SK-N-SH (cell line): ENCODE measurements at regions of chr2 and their contacts with region 1.

Region 1: GRCh38 chr2:46296840-46297545 is at the start of gene EPAS1:
- DNase-seq: peak; percentile 100
- H3K4me3 ChIP-seq: peak within 1 kb of the TSS; percentile 96 to 98
- H3K27ac ChIP-seq: peak within 1 kb of the TSS; percentile 71 to 96
- H3K4me1 ChIP-seq: peaks cover 7 to 25% of the 10 kb centered on the region in 2 experiments; a peak in 2 of 4 replicates
- H3K27me3 ChIP-seq: no peaks in the 10 kb centered on the region
- CTCF ChIP-seq: no peak
- EP300 ChIP-seq: no peak
- RAD21 ChIP-seq: no peak
- polyA plus RNA-seq, gene EPAS1: 69.2 and 92.2 TPM in 2 replicates

Region 2: DNA sequence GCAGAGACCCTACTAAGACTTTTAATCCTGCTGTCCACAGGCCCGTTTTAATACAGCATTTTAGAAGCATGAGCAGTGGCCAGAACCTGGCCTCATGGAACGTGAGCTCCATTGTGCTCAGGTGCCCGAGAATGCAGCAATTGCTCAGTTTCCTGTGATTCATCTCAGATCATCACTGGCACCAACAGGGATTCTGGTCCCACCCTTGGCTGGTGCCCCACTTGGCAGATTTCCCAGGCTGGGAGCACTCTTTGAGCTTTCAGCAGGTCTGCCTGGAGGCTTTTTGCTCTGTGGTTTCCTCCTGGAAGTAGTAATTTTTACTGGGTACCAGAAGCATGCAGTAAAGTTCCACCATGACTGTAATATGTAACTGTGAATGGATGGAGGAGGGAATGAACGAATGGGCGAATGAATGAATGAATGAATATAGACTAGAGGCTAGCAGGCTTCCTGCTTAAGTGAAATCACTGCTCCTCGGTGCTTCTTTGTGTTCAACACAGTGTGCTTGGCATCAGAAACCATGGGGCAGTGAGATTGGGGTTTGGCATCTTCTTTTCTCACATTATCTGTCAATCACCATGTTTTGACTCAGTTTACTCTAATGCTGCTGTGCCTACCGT is 332.7 kb before region 1 on chr2:
- CTCF ChIA-PET with region 1: no interaction called
- POLR2A ChIA-PET with region 1: no interaction called
- DNase-seq: peak; percentile 78
- H3K4me3 ChIP-seq: peak overlapping the region in 1 of 2 experiments; percentile 31; a peak in 2 of 4 replicates
- H3K27ac ChIP-seq: peak overlapping the region; percentile 72
- H3K4me1 ChIP-seq: peaks cover 31 to 43% of the 10 kb centered on the region in 2 experiments
- H3K27me3 ChIP-seq: no peaks in the 10 kb centered on the region
- CTCF ChIP-seq: no peak
- EP300 ChIP-seq: peak; percentile 72 to 99
- RAD21 ChIP-seq: peak; percentile 18; the same call in 1 of the 2 replicates

Region 3: GRCh38 chr2:46010925-46011490 is 286.0 kb before region 1 on chr2:
- CTCF ChIA-PET with region 1: interaction called, 26 read pairs
- POLR2A ChIA-PET with region 1: interaction called, 3 read pairs
- DNase-seq: peak; percentile 72
- H3K4me3 ChIP-seq: no peak overlapping the region
- H3K27ac ChIP-seq: peak overlapping the region in 1 of 2 experiments; percentile 28; a peak in 2 of 4 replicates
- H3K4me1 ChIP-seq: peaks cover 8 to 23% of the 10 kb centered on the region in 2 experiments; a peak in 3 of 4 replicates
- H3K27me3 ChIP-seq: no peaks in the 10 kb centered on the region
- CTCF ChIP-seq: peak; percentile 92
- EP300 ChIP-seq: no peak
- RAD21 ChIP-seq: peak; percentile 93

Region 4: DNA sequence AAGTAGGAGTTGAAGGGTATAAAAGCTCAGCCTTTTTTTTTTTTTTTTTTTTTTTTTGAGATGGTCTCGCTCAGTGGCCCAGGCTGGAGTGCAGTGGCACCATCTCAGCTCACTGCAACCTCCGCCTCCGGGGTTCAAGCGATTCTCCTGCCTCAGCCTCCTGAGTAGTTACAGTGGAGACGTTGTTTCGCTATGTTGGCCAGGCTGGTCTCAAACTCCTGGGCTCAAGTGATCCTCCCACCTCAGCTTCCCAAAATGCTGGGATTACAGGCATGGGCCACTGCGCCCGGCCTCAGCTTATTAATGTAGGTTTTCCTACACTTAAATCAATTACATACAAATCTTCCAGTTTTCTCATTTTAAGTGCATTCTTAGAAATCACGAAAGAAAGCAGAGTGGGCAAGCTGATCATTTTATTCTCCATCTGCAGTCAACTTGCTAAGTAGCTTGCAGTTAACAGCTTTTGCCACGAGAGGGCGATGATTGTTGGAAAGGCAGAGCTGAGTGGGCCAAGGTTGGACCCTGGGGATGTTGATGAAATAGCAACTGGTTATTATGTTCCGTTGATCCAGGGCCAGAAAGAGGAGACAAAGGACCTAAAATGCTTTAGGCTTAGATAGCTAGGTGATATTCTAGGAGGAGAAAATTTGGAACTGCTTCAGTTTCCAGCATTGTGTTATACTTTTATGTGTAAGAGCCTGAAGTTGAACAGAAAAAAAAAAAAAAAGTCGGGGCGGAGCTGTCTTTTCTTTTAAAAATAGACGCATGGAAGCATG is 234.2 kb before region 1 on chr2:
- CTCF ChIA-PET with region 1: interaction called, 45 read pairs
- POLR2A ChIA-PET with region 1: interaction called, 14 read pairs
- DNase-seq: peak; percentile 82
- H3K4me3 ChIP-seq: no peak overlapping the region; a peak in 1 of 4 replicates
- H3K27ac ChIP-seq: no peak overlapping the region
- H3K4me1 ChIP-seq: peaks cover 14 to 25% of the 10 kb centered on the region in 2 experiments
- H3K27me3 ChIP-seq: no peaks in the 10 kb centered on the region
- CTCF ChIP-seq: peak; percentile 99
- EP300 ChIP-seq: no peak
- RAD21 ChIP-seq: peak; percentile 97

Region 5: GRCh38 chr2:46187112-46187618 is 109.8 kb before region 1 on chr2:
- CTCF ChIA-PET with region 1: no interaction called
- POLR2A ChIA-PET with region 1: no interaction called
- DNase-seq: no peak
- H3K4me3 ChIP-seq: no peak overlapping the region
- H3K27ac ChIP-seq: no peak overlapping the region
- H3K4me1 ChIP-seq: peaks cover 0 to 2% of the 10 kb centered on the region in 2 experiments; a peak in 1 of 4 replicates
- H3K27me3 ChIP-seq: no peaks in the 10 kb centered on the region
- CTCF ChIP-seq: no peak
- EP300 ChIP-seq: no peak
- RAD21 ChIP-seq: no peak

Region 6: DNA sequence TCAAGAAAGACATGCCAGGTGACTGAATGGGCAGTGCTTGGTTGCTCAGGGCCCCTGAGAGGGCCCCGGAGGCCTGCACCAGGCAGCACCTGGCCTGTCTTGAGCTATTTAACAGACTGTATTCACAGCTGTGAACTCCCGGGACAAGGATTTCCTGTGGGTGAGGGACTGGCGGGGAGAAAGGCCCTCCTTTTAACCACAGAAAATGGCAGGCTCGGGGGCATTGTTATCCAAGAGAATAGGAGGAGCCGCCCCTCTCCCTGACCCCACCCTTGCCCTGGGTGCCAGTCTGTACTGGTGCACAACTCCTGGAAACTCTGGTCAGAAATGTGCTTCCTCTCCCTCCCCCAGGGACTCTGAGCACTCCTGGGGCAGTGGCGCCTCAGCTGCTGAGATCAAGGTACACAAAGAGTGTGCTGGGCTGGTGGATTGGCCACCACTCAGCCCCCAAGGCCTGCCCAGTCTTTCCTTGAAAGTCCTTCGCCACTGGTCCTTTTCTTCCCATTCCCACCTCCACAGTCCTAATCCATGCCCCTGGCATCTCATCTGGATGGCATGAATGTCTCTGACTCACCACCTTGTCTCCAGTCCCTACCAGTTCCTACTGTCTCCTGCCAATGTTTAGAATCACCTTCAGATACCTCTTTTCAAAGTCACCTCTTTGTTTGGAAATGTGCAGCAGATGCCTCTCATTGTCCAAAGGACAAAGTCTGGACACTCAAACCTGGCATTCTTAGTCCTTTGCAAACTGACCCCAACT is 19.4 kb before region 1 on chr2:
- CTCF ChIA-PET with region 1: interaction called, 40 read pairs
- POLR2A ChIA-PET with region 1: no interaction called
- DNase-seq: no peak
- H3K4me3 ChIP-seq: no peak overlapping the region
- H3K27ac ChIP-seq: no peak overlapping the region
- H3K4me1 ChIP-seq: no peaks in the 10 kb centered on the region; a peak in 1 of 4 replicates
- H3K27me3 ChIP-seq: no peaks in the 10 kb centered on the region
- CTCF ChIP-seq: no peak
- EP300 ChIP-seq: no peak
- RAD21 ChIP-seq: no peak

Region 7: GRCh38 chr2:46315103-46315890 is 18.3 kb after region 1 on chr2:
- CTCF ChIA-PET with region 1: interaction called, 28 read pairs
- POLR2A ChIA-PET with region 1: interaction called, 7 read pairs
- DNase-seq: peak; percentile 50
- H3K4me3 ChIP-seq: peak overlapping the region in 1 of 2 experiments; percentile 25; a peak in 2 of 4 replicates
- H3K27ac ChIP-seq: peak overlapping the region; percentile 92 to 98
- H3K4me1 ChIP-seq: peaks cover 46 to 69% of the 10 kb centered on the region in 2 experiments
- H3K27me3 ChIP-seq: no peaks in the 10 kb centered on the region
- CTCF ChIP-seq: no peak
- EP300 ChIP-seq: peak; percentile 12 to 96; a peak in 3 of 4 replicates
- RAD21 ChIP-seq: no peak

Region 8: DNA sequence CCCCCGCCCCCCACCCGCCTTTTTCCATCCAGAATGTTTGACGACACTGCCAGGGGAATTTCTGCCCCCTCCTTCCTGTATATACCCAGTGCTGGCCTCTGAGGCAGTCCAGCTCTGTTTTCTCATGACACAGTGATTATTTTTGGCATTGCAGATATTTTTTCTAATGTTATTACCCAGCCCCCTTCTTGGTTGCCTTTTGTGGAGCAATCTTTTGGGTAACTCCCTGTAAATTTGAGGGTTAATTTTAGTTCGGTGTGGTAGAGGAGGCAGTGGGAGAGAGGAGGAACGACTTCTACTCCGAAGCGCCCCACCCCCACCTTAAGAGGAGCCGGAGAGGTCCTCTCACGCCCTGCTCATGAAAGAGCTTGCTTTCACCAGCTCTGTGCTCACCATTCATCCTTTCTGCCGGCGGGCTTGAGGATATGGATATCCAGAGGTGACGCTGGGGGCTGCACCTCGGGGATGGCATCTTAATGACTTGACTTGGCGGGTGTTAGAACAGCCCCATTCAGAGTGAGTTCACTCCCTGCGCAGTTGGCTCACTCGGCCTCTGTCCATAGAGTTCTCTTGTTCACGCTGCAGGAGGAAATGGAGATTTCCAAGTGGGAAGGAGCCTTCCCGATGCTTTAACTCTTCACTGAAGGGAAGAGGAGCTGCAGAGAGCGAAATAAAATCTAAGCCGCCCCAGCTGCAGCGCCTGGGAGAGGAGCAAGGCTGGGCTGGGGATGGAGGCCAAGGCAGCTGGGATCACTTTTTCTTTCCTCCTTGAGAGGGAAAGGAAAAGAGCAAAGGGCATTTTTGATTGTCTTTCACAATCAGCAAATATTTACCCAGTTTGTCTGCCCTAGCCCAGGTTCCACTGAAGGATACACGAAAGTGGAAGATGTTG is 38.6 kb after region 1 on chr2:
- CTCF ChIA-PET with region 1: interaction called, 57 read pairs
- POLR2A ChIA-PET with region 1: interaction called, 97 read pairs
- DNase-seq: no peak
- H3K4me3 ChIP-seq: peak overlapping the region; percentile 21 to 50
- H3K27ac ChIP-seq: peak overlapping the region; percentile 100
- H3K4me1 ChIP-seq: peaks cover 86 to 97% of the 10 kb centered on the region in 2 experiments
- H3K27me3 ChIP-seq: no peaks in the 10 kb centered on the region
- CTCF ChIP-seq: no peak
- EP300 ChIP-seq: 0 out of 4 replicates have a peak, but pooled peaks of 1 of the 2 experiments have one; percentile 29
- RAD21 ChIP-seq: no peak

Region 9: DNA sequence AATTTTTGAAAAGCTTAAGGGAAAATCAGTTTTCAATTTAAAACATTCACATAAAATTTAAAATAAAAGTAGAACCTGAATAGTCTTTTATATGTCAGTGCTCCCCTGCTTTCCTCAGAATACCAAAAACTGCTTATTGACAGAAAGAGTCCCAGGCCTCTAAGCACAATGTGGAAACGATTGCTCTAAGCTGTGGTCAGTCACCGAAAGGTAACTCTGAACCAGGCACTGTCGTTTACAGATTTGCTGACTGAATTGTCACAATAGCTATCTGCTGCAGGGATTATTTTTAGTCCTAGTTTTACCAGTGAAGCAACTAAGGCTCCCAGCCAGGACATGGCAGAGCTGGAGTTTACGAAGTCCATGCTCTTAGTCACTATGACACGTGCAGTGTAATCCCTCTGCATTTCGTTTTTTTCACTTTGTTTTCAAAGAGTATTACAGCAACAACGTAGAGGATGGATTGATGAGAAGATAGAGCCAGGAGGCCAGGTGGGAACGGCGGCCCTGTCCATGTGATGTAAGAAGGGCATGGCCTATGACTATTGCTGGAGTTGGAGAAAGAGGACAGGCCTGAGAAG is 154.2 kb after region 1 on chr2:
- CTCF ChIA-PET with region 1: no interaction called
- POLR2A ChIA-PET with region 1: no interaction called
- DNase-seq: no peak
- H3K4me3 ChIP-seq: no peak overlapping the region
- H3K27ac ChIP-seq: no peak overlapping the region
- H3K4me1 ChIP-seq: no peaks in the 10 kb centered on the region
- H3K27me3 ChIP-seq: no peaks in the 10 kb centered on the region
- CTCF ChIP-seq: no peak
- EP300 ChIP-seq: no peak
- RAD21 ChIP-seq: no peak

Region 10: GRCh38 chr2:46487667-46488333 is 190.8 kb after region 1 on chr2:
- CTCF ChIA-PET with region 1: no interaction called
- POLR2A ChIA-PET with region 1: no interaction called
- DNase-seq: no peak
- H3K4me3 ChIP-seq: no peak overlapping the region
- H3K27ac ChIP-seq: peak overlapping the region in 1 of 2 experiments; percentile 53; a peak in 2 of 4 replicates
- H3K4me1 ChIP-seq: peaks cover 17 to 23% of the 10 kb centered on the region in 2 experiments; a peak in 3 of 4 replicates
- H3K27me3 ChIP-seq: no peaks in the 10 kb centered on the region
- CTCF ChIP-seq: no peak
- EP300 ChIP-seq: no peak
- RAD21 ChIP-seq: no peak